ENCODE measurements at regions of chr14 and their contacts with region 1.

Region 1: GRCh38 chr14:57317316-57317715 is 48.5 kb downstream of the AP5M1 start:
- DNase-seq: peak; percentile 59 to 87
- H3K4me3 ChIP-seq: no peak overlapping the region
- CTCF ChIP-seq: no peak
- POLR2A ChIP-seq: no peak

Region 2: DNA sequence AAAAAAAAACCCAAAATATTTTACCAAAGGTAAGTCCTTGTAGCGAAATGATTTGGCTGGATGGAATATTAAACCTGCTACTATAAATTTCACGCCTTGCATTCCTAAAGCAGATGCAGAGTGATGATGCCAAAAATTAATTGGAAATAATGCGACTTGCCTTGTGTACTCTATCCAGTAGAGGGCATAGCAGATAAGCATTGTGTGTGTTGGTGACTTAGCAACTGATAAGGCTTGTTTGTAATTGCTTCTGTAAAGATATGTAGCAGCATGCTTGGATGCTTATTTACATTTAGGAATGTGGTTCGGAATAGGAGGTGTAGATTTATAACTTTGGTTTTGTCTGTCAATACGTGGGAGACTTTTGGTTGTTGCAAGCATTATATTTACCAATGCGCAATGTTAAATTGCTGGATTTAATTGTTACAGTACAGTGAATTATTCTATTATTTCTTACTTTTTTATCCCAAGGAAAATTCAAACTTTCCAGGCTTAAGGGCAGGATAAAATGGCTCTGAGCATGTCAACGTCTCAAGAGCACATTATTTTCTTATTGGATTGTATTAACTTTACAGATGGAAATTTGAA is 657.3 kb before region 1 on chr14:
- intact Hi-C with region 1: loop called (anchors 10 kb)
- DNase-seq: no peak
- H3K4me3 ChIP-seq: no peak overlapping the region
- CTCF ChIP-seq: no peak
- POLR2A ChIP-seq: no peak

Measured in lower leg skin (tissue), 4 donors.